ENCODE measurements at regions of chr10 and their contacts with region 1.

Region 1: GRCh38 chr10:65735382-65735781 is 1190.5 kb upstream of the LRRTM3 start:
- DNase-seq: no peak
- ATAC-seq: no peak
- H3K4me3 ChIP-seq: no peak overlapping the region
- H3K27ac ChIP-seq: no peak overlapping the region
- H3K4me1 ChIP-seq: no peaks in the 10 kb centered on the region
- H3K27me3 ChIP-seq: no peaks in the 10 kb centered on the region
- CTCF ChIP-seq: no peak

Region 2: DNA sequence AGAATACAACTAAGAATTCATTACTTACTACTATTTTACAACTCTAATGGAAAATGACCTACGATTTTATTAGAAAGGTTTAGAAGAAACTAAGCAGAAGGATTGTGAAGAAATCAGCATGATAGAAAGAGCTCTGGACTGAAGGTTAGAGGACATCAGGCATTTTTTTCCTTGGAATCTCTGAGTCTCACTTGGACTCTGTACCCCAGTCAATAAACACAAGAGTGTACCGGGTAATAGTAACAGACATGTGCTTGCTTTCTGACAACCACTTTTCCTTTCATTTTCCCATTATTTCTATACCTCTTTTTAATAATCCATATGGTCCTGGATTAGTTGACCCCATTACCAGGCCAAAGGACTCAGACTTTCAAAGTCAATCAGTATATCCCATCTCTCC is 50.5 kb before region 1 on chr10:
- CTCF ChIA-PET with region 1: no interaction called
- POLR2A ChIA-PET with region 1: no interaction called
- intact Hi-C with region 1: loop called (anchors 5 kb)
- DNase-seq: no peak
- ATAC-seq: no peak
- H3K4me3 ChIP-seq: no peak overlapping the region
- H3K27ac ChIP-seq: no peak overlapping the region
- H3K4me1 ChIP-seq: no peaks in the 10 kb centered on the region
- H3K27me3 ChIP-seq: no peaks in the 10 kb centered on the region
- CTCF ChIP-seq: no peak

Region 3: DNA sequence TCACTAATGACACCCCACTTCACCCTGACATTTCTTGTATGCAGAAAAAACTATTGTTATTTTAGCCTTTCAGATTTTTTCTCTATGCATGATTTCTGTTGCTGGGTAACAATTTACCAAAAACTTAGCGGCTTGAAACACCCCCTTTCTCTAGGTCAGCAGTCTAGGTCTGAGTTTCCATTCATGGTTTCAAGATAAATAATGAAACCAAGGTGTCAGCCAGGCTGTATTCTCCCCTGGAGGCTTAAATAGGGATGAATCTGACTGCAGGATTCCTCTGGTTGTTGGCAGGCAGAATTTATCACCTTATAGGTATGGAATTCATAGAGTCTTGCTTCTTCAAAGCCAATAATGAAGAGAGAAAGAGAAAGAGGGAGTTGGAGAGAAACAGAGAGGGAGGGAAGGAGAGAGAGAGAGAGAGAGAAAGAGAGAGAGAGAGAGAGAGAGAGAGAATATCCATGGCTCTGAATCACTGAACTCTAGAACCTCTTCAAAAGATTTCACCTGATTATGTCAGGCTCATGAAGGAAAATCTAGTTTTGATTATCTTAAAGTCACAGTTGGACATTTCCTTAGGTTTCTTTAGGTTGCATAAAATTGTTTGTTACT is 34.1 kb before region 1 on chr10:
- CTCF ChIA-PET with region 1: no interaction called
- POLR2A ChIA-PET with region 1: no interaction called
- intact Hi-C with region 1: loop called (anchors 5 kb)
- DNase-seq: no peak
- ATAC-seq: no peak
- H3K4me3 ChIP-seq: no peak overlapping the region
- H3K27ac ChIP-seq: no peak overlapping the region
- H3K4me1 ChIP-seq: no peaks in the 10 kb centered on the region
- H3K27me3 ChIP-seq: no peaks in the 10 kb centered on the region
- CTCF ChIP-seq: no peak

Region 4: GRCh38 chr10:65769828-65770227 is 34.4 kb after region 1 on chr10:
- CTCF ChIA-PET with region 1: no interaction called
- POLR2A ChIA-PET with region 1: no interaction called
- intact Hi-C with region 1: no loop called
- DNase-seq: no peak
- ATAC-seq: no peak
- H3K4me3 ChIP-seq: no peak overlapping the region
- H3K27ac ChIP-seq: no peak overlapping the region
- H3K4me1 ChIP-seq: no peaks in the 10 kb centered on the region
- H3K27me3 ChIP-seq: no peaks in the 10 kb centered on the region
- CTCF ChIP-seq: no peak

Measured in PC-3 (cell line).